Caco-2 (cell line): ENCODE measurements at regions of chr1 and their contacts with region 1.

Region 1: DNA sequence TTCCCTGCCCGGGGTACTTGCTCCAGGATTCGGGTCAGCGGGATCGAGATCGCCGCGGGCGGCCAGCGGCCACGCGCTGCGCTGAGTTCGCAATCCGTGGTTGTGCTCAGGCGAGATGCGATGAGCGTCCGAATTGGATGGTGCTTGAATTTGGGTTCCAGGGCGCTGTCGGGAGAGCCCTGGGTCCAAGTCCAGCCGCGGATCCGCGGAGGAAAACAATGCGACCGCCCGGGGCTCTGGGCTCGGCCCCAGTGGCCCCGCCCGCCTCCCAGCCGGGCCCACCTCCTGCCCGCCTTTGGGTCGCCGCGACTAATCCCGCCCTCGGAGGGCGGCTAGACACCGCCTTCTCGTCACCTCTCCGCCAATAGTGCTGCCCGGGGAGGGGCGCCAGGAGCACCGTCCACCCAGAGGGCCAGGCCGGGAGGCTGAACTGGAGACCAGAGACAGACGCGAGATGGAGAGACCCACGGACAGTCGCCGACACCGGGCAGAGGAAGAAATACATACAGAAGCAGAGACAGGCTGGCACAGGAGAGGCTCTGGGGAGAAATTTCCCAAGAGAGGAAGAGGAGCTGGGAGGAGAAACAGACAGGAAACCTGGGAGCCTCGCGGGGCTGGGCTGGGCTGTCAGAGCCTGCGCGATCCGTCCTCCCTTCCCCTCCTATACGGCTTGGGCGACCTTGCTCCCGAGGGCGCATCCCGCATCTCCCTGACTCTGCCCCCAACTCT is at the start of gene SEMA6C:
- DNase-seq: peak; percentile 93 to 95
- H3K4me3 ChIP-seq: peak within 1 kb of the TSS; percentile 80
- H3K4me3 Mint-ChIP-seq: peak within 1 kb of the TSS; percentile 86
- H3K27ac Mint-ChIP-seq: peak within 1 kb of the TSS; percentile 10
- H3K4me1 ChIP-seq: peaks cover 16% of the 10 kb centered on the region
- H3K4me1 Mint-ChIP-seq: peaks cover 12% of the 10 kb centered on the region
- H3K27me3 ChIP-seq: no peaks in the 10 kb centered on the region
- H3K27me3 Mint-ChIP-seq: no peaks in the 10 kb centered on the region
- CTCF ChIP-seq: no peak
- total RNA-seq, gene SEMA6C: 2.8 and 3.7 TPM in 2 replicates

Region 2: DNA sequence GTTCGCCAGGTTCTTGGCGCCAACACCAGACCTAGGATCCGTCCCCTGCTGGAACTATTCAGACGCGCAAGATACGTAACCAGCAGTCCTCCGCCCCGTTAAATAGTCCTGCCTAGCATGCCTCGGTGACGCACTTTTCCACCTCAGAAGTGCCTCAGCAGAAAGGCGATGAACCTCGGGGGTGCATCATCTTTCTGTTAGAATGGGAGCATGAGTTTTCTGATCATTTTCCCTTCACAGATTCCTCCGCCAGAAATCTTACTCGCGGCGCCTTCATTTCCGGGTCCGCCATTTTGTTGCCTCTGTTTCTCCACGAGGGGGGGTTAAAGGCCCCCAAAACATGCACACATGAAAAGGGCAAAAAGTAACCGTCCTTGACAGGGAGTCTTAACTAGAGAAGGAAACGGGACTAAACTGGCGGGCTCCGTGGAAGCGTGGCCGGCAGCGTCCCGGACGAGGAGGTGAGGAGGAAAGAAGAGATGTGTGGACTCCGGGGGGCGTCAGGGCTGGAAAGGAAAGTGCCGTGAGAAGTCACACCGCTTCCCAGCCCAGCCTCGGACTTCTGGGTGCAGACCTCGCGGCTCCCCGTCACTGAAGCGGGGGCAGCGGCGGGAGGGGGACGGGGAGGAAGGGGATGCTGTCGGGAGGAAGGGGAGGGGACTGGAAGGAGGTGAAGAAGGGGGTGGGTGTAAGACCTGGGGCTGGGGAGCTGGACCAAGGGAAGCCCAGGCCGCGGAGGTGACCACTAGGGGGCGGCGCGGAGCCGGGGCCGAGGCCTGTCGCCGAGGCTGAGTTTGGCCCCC is 75.9 kb before region 1 on chr1 and contains the start of gene GABPB2:
- CTCF ChIA-PET with region 1: no interaction called
- POLR2A ChIA-PET with region 1: no interaction called
- intact Hi-C with region 1: loop called (anchors 2 kb)
- DNase-seq: peak; percentile 87 to 90
- H3K4me3 ChIP-seq: peak within 1 kb of the TSS; percentile 64
- H3K4me3 Mint-ChIP-seq: peak within 1 kb of the TSS; percentile 98
- H3K27ac Mint-ChIP-seq: peak within 1 kb of the TSS; percentile 100
- H3K4me1 ChIP-seq: peaks cover 10% of the 10 kb centered on the region; the same call in 1 of the 2 replicates
- H3K4me1 Mint-ChIP-seq: no peaks in the 10 kb centered on the region
- H3K27me3 ChIP-seq: no peaks in the 10 kb centered on the region
- H3K27me3 Mint-ChIP-seq: no peaks in the 10 kb centered on the region
- CTCF ChIP-seq: peak; percentile 74 to 95
- total RNA-seq, gene GABPB2: 2.0 and 2.6 TPM in 2 replicates

Region 3: GRCh38 chr1:151130987-151131586 is 15.5 kb before region 1 on chr1:
- CTCF ChIA-PET with region 1: interaction called, 4 read pairs
- POLR2A ChIA-PET with region 1: no interaction called
- intact Hi-C with region 1: loop called (anchors 2 kb)
- DNase-seq: peak; percentile 93 to 96
- H3K4me3 ChIP-seq: peak overlapping the region; percentile 32
- H3K4me3 Mint-ChIP-seq: peak overlapping the region; percentile 77
- H3K27ac Mint-ChIP-seq: peak overlapping the region; percentile 73
- H3K4me1 ChIP-seq: peaks cover 5% of the 10 kb centered on the region; the same call in 1 of the 2 replicates
- H3K4me1 Mint-ChIP-seq: no peaks in the 10 kb centered on the region
- H3K27me3 ChIP-seq: no peaks in the 10 kb centered on the region
- H3K27me3 Mint-ChIP-seq: no peaks in the 10 kb centered on the region
- CTCF ChIP-seq: no peak